ENCODE measurements at regions of chr1 and their contacts with region 1.

Region 1: DNA sequence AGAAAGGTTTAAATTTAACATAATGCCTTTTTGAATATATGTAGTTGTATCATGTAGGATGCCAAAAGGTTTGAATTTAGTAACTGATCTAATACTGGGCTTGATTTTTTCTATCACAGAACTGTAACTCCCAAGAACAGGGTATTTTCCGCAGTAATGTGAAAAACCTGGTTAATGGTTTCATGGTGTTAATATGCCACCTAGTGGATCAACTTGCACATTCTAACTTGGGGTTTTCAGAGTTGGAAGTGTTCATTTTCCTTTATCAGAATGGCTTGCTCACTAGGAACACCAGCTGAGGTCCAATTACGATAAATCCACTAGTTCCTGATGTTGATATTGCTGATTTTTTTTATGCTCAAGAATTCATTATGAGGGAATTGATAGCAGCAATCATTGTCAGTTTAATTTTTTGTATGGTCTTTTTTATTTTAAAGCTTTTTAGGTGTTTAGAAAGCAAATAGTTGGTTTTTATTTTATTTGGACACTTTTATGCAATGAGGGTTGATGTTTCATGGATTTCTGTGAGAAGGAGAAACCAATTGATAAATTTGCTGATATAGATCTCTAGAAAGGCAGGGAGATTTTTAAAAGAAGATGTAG is 157.2 kb downstream of the PLA2G4A start:
- DNase-seq: peak; percentile 45
- H3K4me3 ChIP-seq: no peak overlapping the region
- H3K27ac ChIP-seq: no peak overlapping the region
- H3K4me1 ChIP-seq: no peaks in the 10 kb centered on the region
- CTCF ChIP-seq: peak; percentile 87

Region 2: DNA sequence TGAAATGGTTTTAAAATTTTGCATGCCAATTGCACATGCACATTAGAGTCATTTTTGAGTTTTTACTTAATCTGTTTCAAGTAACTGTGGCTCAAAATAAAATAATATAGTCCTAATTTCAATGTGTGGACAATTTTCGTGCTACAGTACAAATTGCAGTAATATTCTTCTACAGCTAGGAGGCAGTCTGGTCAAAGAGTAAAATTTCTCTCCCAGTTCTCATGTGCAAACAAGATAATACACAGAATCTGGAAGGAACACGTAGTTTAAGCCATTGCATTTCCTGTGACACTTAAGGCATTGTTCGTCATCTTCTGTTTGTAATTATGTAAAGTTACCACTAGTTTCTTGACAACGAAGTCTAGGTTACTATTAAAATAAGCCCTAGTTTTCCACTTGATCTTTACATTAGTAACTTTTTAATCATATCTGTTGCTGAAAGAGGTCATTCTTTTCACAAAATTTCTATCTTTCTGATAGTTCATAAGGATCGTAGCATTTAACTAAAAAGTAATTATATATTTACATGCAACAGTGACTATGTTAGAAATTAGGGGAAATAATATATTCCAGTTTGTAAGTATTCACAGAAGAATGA is 581.4 kb before region 1 on chr1:
- CTCF ChIA-PET with region 1: no interaction called
- POLR2A ChIA-PET with region 1: no interaction called
- intact Hi-C with region 1: loop called (anchors 10 kb)
- DNase-seq: peak; percentile 44
- H3K4me3 ChIP-seq: no peak overlapping the region
- H3K27ac ChIP-seq: no peak overlapping the region
- H3K4me1 ChIP-seq: no peaks in the 10 kb centered on the region
- CTCF ChIP-seq: peak; percentile 90

Region 3: GRCh38 chr1:186482661-186483255 is 503.2 kb before region 1 on chr1:
- CTCF ChIA-PET with region 1: no interaction called
- POLR2A ChIA-PET with region 1: no interaction called
- intact Hi-C with region 1: loop called (anchors 1 kb)
- DNase-seq: peak; percentile 67
- H3K4me3 ChIP-seq: no peak overlapping the region
- H3K27ac ChIP-seq: no peak overlapping the region
- H3K4me1 ChIP-seq: no peaks in the 10 kb centered on the region
- CTCF ChIP-seq: peak; percentile 96

Region 4: GRCh38 chr1:186605762-186606350 is 380.1 kb before region 1 on chr1:
- CTCF ChIA-PET with region 1: no interaction called
- POLR2A ChIA-PET with region 1: no interaction called
- intact Hi-C with region 1: loop called (anchors 5 kb)
- DNase-seq: peak; percentile 27
- H3K4me3 ChIP-seq: no peak overlapping the region
- H3K27ac ChIP-seq: no peak overlapping the region
- H3K4me1 ChIP-seq: no peaks in the 10 kb centered on the region
- CTCF ChIP-seq: peak; percentile 75

Region 5: GRCh38 chr1:186722711-186723309 is 263.2 kb before region 1 on chr1:
- CTCF ChIA-PET with region 1: no interaction called
- POLR2A ChIA-PET with region 1: no interaction called
- intact Hi-C with region 1: loop called (anchors 10 kb)
- DNase-seq: peak; percentile 57
- H3K4me3 ChIP-seq: no peak overlapping the region
- H3K27ac ChIP-seq: no peak overlapping the region
- H3K4me1 ChIP-seq: no peaks in the 10 kb centered on the region
- CTCF ChIP-seq: peak; percentile 88

Region 6: DNA sequence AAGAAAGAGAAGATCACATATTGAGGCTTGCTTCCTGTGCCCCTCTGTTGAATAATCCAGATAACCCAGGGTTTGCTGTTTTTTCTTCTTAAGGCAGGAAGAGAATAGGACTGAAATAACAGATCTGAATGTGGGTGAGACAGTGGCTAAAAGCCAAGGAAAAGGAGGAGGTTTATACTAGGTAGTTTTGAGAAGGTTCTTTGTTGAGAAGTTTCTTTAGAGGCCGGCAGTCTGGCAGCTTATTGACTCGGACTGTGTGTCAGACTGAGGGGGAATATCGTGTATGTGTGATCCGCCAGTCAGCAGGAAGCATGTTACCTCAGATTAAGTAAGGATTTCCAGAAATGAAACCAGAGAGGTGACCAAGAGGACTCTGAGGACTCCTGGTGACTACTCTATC is 37.5 kb before region 1 on chr1:
- CTCF ChIA-PET with region 1: no interaction called
- POLR2A ChIA-PET with region 1: no interaction called
- intact Hi-C with region 1: no loop called
- DNase-seq: no peak
- H3K4me3 ChIP-seq: no peak overlapping the region
- H3K27ac ChIP-seq: no peak overlapping the region
- H3K4me1 ChIP-seq: no peaks in the 10 kb centered on the region
- CTCF ChIP-seq: no peak

Region 7: GRCh38 chr1:187078321-187078720 is 92.3 kb after region 1 on chr1:
- CTCF ChIA-PET with region 1: no interaction called
- POLR2A ChIA-PET with region 1: no interaction called
- intact Hi-C with region 1: no loop called
- DNase-seq: no peak
- H3K4me3 ChIP-seq: no peak overlapping the region
- H3K27ac ChIP-seq: no peak overlapping the region
- H3K4me1 ChIP-seq: peaks cover 4% of the 10 kb centered on the region
- CTCF ChIP-seq: no peak

Region 8: GRCh38 chr1:187326557-187326956 is 340.6 kb after region 1 on chr1:
- CTCF ChIA-PET with region 1: no interaction called
- POLR2A ChIA-PET with region 1: no interaction called
- intact Hi-C with region 1: no loop called
- DNase-seq: no peak
- H3K4me3 ChIP-seq: no peak overlapping the region
- H3K27ac ChIP-seq: no peak overlapping the region
- H3K4me1 ChIP-seq: no peaks in the 10 kb centered on the region
- CTCF ChIP-seq: no peak

Region 9: GRCh38 chr1:187563191-187563590 is 577.2 kb after region 1 on chr1:
- CTCF ChIA-PET with region 1: no interaction called
- POLR2A ChIA-PET with region 1: no interaction called
- intact Hi-C with region 1: no loop called
- DNase-seq: no peak
- H3K4me3 ChIP-seq: no peak overlapping the region
- H3K27ac ChIP-seq: no peak overlapping the region
- H3K4me1 ChIP-seq: no peaks in the 10 kb centered on the region
- CTCF ChIP-seq: no peak